SK-N-SH (cell line): ENCODE measurements at regions of chr9 and their contacts with region 1.

Region 1: DNA sequence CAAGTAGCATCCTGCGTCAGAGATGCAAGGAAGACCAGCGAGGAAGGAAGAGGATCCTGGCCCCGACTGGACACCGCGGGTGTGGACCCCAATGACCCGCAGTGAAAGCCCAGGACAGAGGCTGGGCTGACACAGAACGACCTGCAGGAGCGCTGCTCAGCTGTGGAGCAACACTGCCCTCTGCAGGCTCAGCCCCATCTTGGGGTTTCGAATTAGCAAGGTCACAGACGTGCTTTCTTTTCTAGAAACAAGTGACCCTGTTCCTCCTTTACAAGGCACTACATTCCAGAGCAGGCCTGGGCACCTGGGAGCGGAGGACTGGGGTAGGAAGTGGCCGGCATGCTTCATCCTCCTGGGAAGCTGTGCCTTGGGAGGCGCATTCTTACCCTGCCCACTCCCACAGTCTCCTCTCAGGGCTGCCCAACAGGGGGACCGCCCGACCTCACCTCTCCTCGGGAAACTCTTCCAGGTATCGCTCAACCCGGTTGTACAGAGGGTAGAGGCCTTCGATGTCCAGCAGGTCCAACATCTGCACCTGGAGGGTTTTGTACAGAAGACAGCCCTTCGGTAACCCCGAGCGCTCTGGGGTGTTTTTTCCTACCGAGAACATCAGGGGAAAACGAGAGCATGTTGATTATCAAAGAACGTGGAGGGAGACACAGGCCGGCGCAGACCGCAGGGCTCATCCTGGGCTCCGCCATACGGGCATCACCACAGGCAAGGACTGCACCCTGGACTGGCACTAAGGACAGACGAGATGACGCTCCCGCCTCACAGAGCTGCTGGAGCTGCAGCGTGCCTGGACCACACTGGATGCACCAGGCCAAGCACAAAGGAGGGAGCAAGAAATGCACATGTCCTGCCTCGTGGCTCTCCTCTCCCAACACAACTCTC is 35.0 kb downstream of the IPPK start:
- DNase-seq: peak; percentile 92
- H3K4me3 ChIP-seq: peak overlapping the region in 1 of 2 experiments; percentile 40; a peak in 1 of 4 replicates
- H3K27ac ChIP-seq: no peak overlapping the region
- H3K4me1 ChIP-seq: no peaks in the 10 kb centered on the region
- H3K27me3 ChIP-seq: no peaks in the 10 kb centered on the region
- CTCF ChIP-seq: peak; percentile 94
- EP300 ChIP-seq: no peak
- RAD21 ChIP-seq: peak; percentile 94

Region 2: GRCh38 chr9:92325269-92325990 is 309.5 kb before region 1 on chr9 and contains the starts of genes CENPP and NOL8:
- CTCF ChIA-PET with region 1: interaction called, 15 read pairs
- POLR2A ChIA-PET with region 1: no interaction called
- DNase-seq: peak; percentile 91
- H3K4me3 ChIP-seq: peak within 1 kb of the TSS; percentile 92 to 96
- H3K27ac ChIP-seq: peak within 1 kb of the TSS; percentile 96 to 97
- H3K4me1 ChIP-seq: peaks cover 16% of the 10 kb centered on the region in 2 experiments; a peak in 3 of 4 replicates
- H3K27me3 ChIP-seq: no peaks in the 10 kb centered on the region
- CTCF ChIP-seq: no peak
- EP300 ChIP-seq: peak in 1 of 2 experiments; percentile 61; a peak in 1 of 4 replicates
- RAD21 ChIP-seq: no peak
- polyA plus RNA-seq, gene CENPP: 1.3 and 1.5 TPM in 2 replicates
- polyA plus RNA-seq, gene NOL8: 9.6 and 13.2 TPM in 2 replicates

Region 3: DNA sequence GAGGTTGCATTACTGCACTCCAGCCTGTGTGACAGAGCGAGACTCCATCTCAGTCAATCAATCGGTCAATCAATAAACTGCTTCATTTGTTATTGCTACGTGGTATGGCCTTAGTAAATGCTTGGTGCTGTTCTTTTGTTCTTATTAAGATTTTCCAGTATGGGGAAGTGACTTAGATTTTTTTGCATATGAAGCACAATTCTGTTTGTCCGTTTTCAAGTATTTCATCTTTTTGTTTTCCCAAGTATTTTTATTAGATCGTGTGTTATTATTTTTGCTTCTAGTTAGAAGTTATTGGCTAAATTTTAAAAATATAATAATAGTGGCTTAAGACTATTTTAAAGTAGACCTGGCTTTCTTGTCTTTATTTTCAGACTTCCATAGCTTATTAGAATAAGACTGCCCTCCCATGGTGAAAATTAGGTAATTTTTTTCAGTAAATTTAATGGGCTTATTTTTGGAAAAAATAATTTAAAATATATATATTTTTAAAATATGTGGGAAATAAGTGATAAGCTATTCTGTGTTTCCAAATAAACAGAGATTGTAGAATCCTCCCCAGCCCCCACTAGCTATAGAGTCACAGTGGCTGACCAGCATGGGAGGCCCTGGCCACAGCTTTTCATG is 195.9 kb before region 1 on chr9:
- CTCF ChIA-PET with region 1: interaction called, 16 read pairs
- POLR2A ChIA-PET with region 1: no interaction called
- DNase-seq: peak; percentile 19
- H3K4me3 ChIP-seq: no peak overlapping the region
- H3K27ac ChIP-seq: peak overlapping the region in 1 of 2 experiments; percentile 41; a peak in 1 of 4 replicates
- H3K4me1 ChIP-seq: peaks cover 0 to 5% of the 10 kb centered on the region in 2 experiments; a peak in 1 of 4 replicates
- H3K27me3 ChIP-seq: no peaks in the 10 kb centered on the region
- CTCF ChIP-seq: peak; percentile 55
- EP300 ChIP-seq: no peak
- RAD21 ChIP-seq: peak; percentile 66

Region 4: DNA sequence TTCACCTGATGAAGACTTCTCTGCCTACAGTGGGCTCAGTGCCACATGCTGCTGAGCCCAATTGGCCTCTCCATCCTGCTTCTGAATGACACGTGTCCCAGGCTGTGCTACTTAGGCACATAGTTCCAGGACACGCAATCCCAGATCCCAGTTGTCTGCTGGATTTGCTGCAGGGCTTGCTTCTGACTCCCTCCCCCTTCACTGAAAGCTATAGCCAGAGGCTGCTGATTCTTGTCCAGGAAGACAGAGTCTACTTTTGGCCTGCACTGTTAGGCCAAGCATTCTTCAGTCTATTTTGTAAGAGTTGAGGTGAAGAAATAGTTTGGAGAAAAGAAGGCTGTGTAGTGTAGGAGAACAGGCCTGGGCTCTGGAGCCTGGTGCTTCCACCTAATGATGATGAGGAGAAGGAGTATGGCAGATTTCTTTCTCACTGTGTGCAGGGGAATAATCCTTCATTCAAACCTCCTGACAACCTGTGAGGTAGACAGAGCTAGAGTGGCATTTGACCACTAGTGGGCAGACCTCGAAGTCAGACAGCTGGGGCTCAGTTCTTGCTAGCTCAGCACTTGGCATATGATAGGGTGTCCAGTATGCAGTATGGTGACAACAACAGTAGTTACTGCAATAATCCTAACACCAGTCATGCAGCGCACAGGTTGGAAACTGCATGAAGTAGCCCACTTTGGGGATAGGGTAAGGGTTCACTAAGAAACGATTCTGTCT is 133.1 kb before region 1 on chr9:
- CTCF ChIA-PET with region 1: interaction called, 14 read pairs
- POLR2A ChIA-PET with region 1: no interaction called
- DNase-seq: peak; percentile 37
- H3K4me3 ChIP-seq: no peak overlapping the region
- H3K27ac ChIP-seq: no peak overlapping the region
- H3K4me1 ChIP-seq: peaks cover 3 to 19% of the 10 kb centered on the region in 2 experiments; a peak in 3 of 4 replicates
- H3K27me3 ChIP-seq: no peaks in the 10 kb centered on the region
- CTCF ChIP-seq: peak; percentile 56
- EP300 ChIP-seq: no peak
- RAD21 ChIP-seq: peak; percentile 53

Region 5: DNA sequence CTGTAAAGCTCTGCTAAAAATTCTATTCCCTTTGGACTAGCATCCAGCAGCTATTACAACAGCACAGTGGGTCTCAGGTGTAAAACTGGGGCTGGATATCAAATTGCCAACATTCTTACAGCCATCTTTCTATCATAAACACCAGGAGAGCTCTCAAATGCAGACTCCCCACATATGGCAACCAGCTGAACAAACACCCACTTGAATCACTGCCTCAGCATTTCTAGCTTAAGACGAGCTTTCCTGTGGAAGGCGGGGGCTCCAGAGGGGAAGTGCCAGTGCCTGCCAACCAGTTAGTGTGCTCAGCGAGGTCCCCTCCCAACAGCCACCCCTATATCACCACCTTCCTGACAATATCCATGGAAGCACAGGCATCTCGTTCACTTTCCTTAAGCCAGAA is 27.2 kb before region 1 on chr9:
- CTCF ChIA-PET with region 1: interaction called, 16 read pairs
- POLR2A ChIA-PET with region 1: no interaction called
- DNase-seq: peak; percentile 82
- H3K4me3 ChIP-seq: no peak overlapping the region
- H3K27ac ChIP-seq: peak overlapping the region; percentile 7 to 64; a peak in 3 of 4 replicates
- H3K4me1 ChIP-seq: peaks cover 5 to 25% of the 10 kb centered on the region in 2 experiments
- H3K27me3 ChIP-seq: no peaks in the 10 kb centered on the region
- CTCF ChIP-seq: no peak
- EP300 ChIP-seq: peak in 1 of 2 experiments; percentile 31; a peak in 1 of 4 replicates
- RAD21 ChIP-seq: no peak

Region 6: DNA sequence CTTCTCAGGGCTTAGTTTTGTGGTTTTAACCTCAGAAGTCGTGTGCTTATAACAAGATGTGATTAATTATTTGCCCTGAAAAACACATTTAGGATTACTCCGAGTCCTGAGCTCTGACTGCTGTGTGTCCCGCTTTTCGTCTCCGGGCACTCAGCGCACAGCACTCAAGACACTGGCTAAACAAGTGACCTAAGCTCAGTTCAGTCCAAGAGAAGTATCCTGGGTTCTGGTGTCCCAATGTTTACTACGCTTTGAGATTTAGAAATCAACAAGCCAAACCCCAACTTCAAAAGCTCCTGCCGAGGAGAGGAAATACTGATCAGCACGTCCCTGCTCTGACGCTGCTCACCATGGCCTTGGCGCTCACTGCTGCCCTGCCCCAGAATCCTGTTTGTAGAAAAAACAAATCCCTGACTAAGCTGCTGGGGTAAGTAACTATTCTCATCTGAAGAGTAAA is 18.3 kb before region 1 on chr9:
- CTCF ChIA-PET with region 1: interaction called, 18 read pairs
- POLR2A ChIA-PET with region 1: no interaction called
- DNase-seq: no peak
- H3K4me3 ChIP-seq: no peak overlapping the region
- H3K27ac ChIP-seq: no peak overlapping the region
- H3K4me1 ChIP-seq: no peaks in the 10 kb centered on the region; a peak in 1 of 4 replicates
- H3K27me3 ChIP-seq: no peaks in the 10 kb centered on the region
- CTCF ChIP-seq: no peak
- EP300 ChIP-seq: no peak
- RAD21 ChIP-seq: no peak

Region 7: DNA sequence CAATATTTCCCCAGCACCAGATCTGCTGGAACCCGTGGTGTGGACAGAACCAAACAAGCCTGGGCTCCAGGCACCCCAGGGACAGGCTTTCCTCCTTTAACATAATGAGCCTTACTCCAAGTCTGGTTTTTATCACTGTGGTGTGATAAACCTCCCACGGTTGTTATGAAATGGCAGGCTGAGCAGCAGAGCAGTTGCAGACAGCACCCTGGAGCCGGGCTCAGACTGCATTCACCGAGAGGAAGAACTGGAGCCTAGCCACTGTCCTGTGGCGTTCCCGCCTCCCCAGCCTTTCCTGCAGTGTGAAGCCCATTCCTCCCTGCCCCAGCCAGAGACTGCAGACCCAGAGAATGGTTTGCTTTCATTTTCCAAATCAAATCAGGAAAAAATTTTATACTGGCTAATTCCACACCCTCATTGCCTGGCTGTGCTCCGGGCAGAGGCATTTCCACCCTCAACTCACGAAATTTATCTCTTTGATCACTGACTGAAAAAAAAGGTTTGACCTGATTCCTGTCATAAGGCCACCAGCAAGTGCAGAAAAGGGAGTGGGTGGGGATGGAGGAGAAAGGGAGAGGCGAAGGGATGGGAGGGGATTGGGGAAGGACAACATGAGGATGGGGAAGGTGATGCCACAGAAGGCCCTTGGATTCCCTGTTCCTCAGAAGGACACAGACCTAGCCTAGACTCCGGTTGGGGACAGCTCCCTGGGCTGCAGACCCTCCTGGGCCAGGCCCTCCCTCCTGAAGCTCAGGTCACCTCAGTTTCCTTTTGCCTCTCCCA is 16.1 kb after region 1 on chr9:
- CTCF ChIA-PET with region 1: interaction called, 13 read pairs
- POLR2A ChIA-PET with region 1: no interaction called
- DNase-seq: peak; percentile 83
- H3K4me3 ChIP-seq: no peak overlapping the region; a peak in 1 of 4 replicates
- H3K27ac ChIP-seq: peak overlapping the region in 1 of 2 experiments; percentile 94; a peak in 2 of 4 replicates
- H3K4me1 ChIP-seq: peaks cover 0 to 39% of the 10 kb centered on the region in 2 experiments; a peak in 1 of 4 replicates
- H3K27me3 ChIP-seq: no peaks in the 10 kb centered on the region
- CTCF ChIP-seq: no peak
- EP300 ChIP-seq: peak in 1 of 2 experiments; percentile 65; a peak in 2 of 4 replicates
- RAD21 ChIP-seq: no peak